Activated CD8-positive, alpha-beta T cell treated with anti-CD3 and anti-CD28 coated beads for 36 hours (primary cell): ENCODE measurements at regions of chr16 and their contacts with region 1.

Region 1: GRCh38 chr16:68590201-68590994 is 51.3 kb downstream of the ZFP90 start:
- DNase-seq: peak; percentile 83
- ATAC-seq: peak; percentile 95
- H3K4me3 Mint-ChIP-seq: peak overlapping the region; percentile 10
- H3K27ac Mint-ChIP-seq: no peak overlapping the region
- H3K4me1 Mint-ChIP-seq: peaks cover 2% of the 10 kb centered on the region
- H3K27me3 Mint-ChIP-seq: no peaks in the 10 kb centered on the region
- CTCF ChIP-seq: peak; percentile 84

Region 2: GRCh38 chr16:68528686-68529379 is 61.6 kb before region 1 on chr16:
- CTCF ChIA-PET with region 1: interaction called, 97 read pairs
- POLR2A ChIA-PET with region 1: no interaction called
- intact Hi-C with region 1: loop called (anchors 2 kb)
- DNase-seq: peak; percentile 93
- ATAC-seq: peak; percentile 87
- H3K4me3 Mint-ChIP-seq: peak overlapping the region; percentile 82
- H3K27ac Mint-ChIP-seq: no peak overlapping the region
- H3K4me1 Mint-ChIP-seq: peaks cover 15% of the 10 kb centered on the region
- H3K27me3 Mint-ChIP-seq: no peaks in the 10 kb centered on the region
- CTCF ChIP-seq: peak; percentile 99

Region 3: DNA sequence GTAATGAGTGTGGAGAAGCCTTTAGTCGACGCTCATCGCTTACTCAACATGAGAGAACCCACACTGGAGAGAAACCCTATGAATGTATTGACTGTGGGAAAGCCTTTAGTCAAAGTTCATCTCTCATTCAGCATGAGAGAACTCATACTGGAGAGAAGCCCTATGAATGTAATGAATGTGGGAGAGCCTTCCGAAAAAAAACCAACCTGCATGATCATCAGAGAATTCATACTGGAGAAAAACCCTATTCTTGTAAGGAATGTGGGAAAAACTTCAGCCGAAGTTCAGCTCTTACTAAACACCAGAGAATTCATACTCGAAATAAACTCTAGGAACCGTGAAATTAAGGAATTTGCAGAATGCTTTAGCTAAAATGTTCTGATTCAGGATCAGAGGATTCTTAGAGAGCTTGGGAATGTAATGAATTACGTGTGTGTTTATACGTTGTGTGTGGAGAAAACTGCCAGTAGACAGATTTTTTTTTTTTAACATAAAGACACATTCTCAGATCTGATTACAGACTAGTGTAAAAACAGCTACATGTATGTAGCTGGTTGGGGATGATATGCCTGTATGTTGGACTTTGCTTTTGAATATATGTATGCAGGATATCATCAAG is 25.9 kb before region 1 on chr16:
- CTCF ChIA-PET with region 1: interaction called, 28 read pairs
- POLR2A ChIA-PET with region 1: no interaction called
- intact Hi-C with region 1: no loop called
- DNase-seq: no peak
- ATAC-seq: no peak
- H3K4me3 Mint-ChIP-seq: no peak overlapping the region
- H3K27ac Mint-ChIP-seq: no peak overlapping the region
- H3K4me1 Mint-ChIP-seq: no peaks in the 10 kb centered on the region
- H3K27me3 Mint-ChIP-seq: no peaks in the 10 kb centered on the region
- CTCF ChIP-seq: no peak

Region 4: DNA sequence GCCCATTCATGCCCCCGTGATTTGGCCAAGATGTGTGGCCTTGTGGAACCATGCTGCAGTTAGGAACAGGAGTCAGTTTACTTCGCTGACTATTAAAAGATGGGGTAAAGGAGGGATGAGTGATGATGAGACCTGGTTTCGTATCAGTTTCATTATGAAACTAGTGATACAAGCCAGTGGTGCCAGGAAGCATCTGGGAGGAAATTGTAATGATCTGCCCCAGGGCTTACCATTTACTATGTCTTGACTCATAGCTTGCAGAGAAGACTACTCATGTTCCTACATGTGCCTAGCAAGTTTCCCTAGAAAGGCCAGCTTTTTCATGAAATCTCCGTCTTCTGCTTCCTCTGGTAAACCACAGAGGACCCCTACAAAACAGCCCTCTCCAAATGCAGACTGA is 77.9 kb after region 1 on chr16:
- CTCF ChIA-PET with region 1: interaction called, 11 read pairs
- POLR2A ChIA-PET with region 1: no interaction called
- intact Hi-C with region 1: no loop called
- DNase-seq: peak; percentile 60
- ATAC-seq: peak; percentile 97
- H3K4me3 Mint-ChIP-seq: no peak overlapping the region
- H3K27ac Mint-ChIP-seq: peak overlapping the region; percentile 68
- H3K4me1 Mint-ChIP-seq: peaks cover 15% of the 10 kb centered on the region
- H3K27me3 Mint-ChIP-seq: peaks cover 2% of the 10 kb centered on the region
- CTCF ChIP-seq: no peak

Region 5: GRCh38 chr16:69123910-69124309 is 533.5 kb after region 1 on chr16:
- CTCF ChIA-PET with region 1: interaction called, 17 read pairs
- POLR2A ChIA-PET with region 1: no interaction called
- intact Hi-C with region 1: no loop called
- DNase-seq: peak; percentile 75
- ATAC-seq: peak; percentile 83
- H3K4me3 Mint-ChIP-seq: no peak overlapping the region
- H3K27ac Mint-ChIP-seq: no peak overlapping the region
- H3K4me1 Mint-ChIP-seq: peaks cover 21% of the 10 kb centered on the region
- H3K27me3 Mint-ChIP-seq: no peaks in the 10 kb centered on the region
- CTCF ChIP-seq: peak; percentile 73